Heart left ventricle (tissue), 16 donors: ENCODE measurements at regions of chr10 and their contacts with region 1.

Region 1: DNA sequence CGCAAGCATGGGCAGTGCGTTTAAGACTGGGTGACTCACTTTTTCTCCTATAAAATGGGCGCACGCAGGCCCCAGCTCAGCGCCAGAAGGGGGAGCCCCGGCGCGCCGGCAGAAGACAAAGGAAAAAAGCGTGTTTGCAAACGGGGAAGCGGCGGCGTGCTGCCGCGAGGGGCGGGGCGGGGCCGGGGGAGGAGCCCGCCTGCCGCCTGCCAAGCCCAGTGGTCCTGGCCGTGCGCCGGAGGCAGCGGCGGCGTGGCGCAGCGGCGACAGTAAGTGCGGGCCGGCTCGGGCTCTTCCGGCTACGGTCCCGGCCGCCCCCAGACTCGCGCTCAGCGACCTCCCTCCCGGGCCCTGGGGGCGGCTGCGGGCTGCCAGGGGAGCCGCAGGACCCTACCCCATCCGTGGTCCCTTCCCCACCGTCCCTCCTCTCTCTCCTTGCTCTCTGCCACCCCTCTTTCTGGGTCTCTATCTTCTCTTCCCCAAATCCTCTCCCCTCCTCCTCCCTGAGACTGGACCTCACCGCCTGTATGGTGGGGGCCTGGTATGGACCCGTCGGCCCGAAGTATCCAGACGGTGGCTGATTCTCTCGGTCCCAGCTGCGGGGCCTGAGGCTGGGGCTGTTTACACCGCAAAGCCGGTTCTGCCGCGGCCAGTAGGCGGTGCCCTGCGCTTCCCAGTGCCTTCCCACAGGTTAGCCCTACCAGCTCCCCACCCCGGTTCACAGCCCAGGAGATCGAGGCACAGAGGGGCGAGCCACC is at the start of gene SLC29A3:
- DNase-seq: peak; percentile 81 to 92 (median 83)
- ATAC-seq: peak; percentile 56 to 95 (median 90)
- H3K4me3 ChIP-seq: peak within 1 kb of the TSS; percentile 61 to 98 (median 78)
- H3K27ac ChIP-seq: peak within 1 kb of the TSS in 11 of 12 donors; percentile 26 to 83 (median 76)
- H3K4me1 ChIP-seq: peaks cover 0 to 34% (median 11%) of the 10 kb centered on the region in 12 donors
- H3K27me3 ChIP-seq: no peaks in the 10 kb centered on the region
- CTCF ChIP-seq: peak; percentile 23 to 68 (median 49)
- POLR2A ChIP-seq: peak in 1 of 2 donors; percentile 82
- total RNA-seq, gene SLC29A3: 0.76 to 6.2 (median 1.8) TPM

Region 2: DNA sequence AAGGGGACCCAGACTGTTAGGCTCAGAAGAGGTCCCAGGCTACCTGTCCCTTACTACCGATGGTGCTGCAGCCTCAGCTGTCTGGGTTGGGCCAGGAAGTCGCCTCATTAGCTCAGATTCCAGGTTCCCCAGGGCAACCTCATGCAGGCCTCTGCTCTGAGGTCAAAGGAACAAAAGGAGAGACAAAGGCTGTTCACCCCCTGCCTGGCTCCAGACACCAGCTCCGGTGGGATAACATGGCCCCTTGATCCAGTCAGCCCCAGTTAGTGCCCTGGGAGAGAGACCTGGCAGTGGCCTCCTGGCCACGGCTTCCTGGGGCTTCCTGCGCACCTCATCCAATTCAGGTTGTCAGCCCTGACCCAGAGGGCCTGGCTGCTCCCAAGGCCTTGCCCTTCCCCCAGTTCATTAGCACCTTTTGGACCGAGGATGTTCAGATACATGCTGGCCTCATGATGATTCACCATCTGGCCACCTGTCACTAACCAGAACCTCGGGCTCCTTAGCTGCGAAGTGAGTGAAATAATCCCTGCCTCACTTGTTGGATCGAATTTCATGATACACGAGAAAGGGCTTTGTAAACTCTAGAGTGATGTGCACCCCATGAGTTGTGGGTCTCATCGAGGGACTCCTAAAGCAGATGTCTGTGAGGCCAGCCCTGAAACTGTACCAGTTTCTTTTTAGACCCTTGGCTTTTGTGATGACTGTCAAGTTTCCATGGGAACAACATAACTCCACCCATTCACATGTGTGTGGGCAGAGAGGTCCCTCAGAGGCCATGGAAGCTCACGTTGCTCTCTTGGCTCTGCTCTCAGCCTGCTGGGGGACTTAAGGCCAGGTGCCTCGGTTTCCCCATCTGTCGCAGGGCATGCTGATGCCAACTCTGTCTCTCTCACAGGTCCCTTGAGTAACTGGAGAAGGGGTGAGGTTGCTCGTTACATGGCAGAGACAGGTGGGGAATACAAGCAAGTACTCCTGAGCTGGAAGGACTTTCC is 351.3 kb before region 1 on chr10:
- intact Hi-C with region 1: no loop called
- DNase-seq: no peak
- ATAC-seq: no peak
- H3K4me3 ChIP-seq: no peak overlapping the region
- H3K27ac ChIP-seq: no peak overlapping the region
- H3K4me1 ChIP-seq: no peaks in the 10 kb centered on the region
- H3K27me3 ChIP-seq: peaks cover 0 to 4% (median 0%) of the 10 kb centered on the region in 9 donors
- CTCF ChIP-seq: no peak
- POLR2A ChIP-seq: no peak

Region 3: DNA sequence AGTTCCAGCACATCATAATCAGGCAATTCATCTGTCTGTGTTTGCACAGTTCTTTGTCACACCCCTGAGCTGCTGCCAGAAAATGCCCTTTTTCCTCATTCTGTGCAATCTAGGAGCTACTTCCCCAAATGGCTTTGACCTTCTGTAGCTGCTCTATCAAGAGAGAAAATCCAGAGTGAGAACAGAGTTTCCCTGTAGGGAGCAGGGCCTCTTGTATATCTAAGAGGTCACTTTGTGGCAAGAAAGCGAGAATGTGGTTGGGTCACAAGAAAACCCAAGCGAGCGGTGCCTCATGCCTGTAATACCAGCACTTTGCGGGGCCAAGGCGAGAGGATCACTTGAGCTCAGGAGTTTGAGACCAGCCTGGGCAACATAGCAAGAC is 24.2 kb after region 1 on chr10:
- intact Hi-C with region 1: no loop called
- DNase-seq: no peak
- ATAC-seq: peak in 2 of 4 donors; percentile 34 to 51
- H3K4me3 ChIP-seq: no peak overlapping the region
- H3K27ac ChIP-seq: peak overlapping the region in 1 of 12 donors; percentile 76
- H3K4me1 ChIP-seq: peaks cover 0 to 24% (median 0%) of the 10 kb centered on the region in 12 donors
- H3K27me3 ChIP-seq: no peaks in the 10 kb centered on the region
- CTCF ChIP-seq: no peak
- POLR2A ChIP-seq: no peak

Region 4: GRCh38 chr10:71371750-71372166 is 52.5 kb after region 1 on chr10:
- intact Hi-C with region 1: loop called in 6 of 10 experiments (anchors 2 to 5 kb)
- DNase-seq: no peak
- ATAC-seq: peak in 3 of 4 donors; percentile 17 to 63 (median 40)
- H3K4me3 ChIP-seq: no peak overlapping the region
- H3K27ac ChIP-seq: peak overlapping the region in 3 of 12 donors; percentile 10 to 85 (median 37)
- H3K4me1 ChIP-seq: peaks cover 0 to 53% (median under 1%) of the 10 kb centered on the region in 12 donors
- H3K27me3 ChIP-seq: no peaks in the 10 kb centered on the region
- CTCF ChIP-seq: no peak
- POLR2A ChIP-seq: no peak

Region 5: DNA sequence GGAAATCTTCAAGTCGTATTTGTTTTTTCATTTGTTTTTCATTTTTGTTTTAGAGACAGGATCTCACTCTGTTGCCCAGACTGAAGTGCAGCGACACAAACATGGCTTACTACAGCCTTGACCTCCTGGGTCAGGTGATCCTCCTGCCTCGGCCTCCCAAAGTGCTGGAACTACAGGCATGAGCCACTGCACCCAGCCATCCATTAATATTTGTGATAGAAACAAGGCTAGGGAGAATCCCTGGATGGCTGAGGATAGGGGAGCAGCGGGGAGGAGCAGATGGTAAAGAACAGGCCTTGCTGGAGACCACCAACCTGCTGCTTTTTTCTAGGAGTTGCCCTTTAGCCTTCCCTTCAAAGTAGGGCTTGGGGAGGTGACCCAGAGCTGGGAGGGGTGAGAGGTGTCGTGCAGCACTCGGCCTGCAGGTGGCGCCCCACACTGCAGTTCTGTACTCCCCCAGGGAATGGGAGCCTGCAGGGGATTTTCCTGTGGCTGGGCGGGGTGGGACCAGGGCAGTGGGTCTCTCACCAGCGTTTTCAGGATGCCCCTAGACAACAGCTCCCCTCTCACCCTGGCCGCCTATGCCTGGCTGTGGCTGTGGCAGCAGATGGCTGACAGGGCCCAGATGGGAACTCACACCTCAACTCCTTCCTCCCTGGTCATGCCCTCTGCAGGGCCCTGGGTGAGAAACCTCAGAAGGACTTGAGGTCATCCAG is 64.9 kb after region 1 on chr10:
- intact Hi-C with region 1: loop called in 5 of 10 experiments (anchors 5 kb)
- DNase-seq: peak; percentile 55 to 83 (median 71)
- ATAC-seq: peak; percentile 82 to 92 (median 89)
- H3K4me3 ChIP-seq: no peak overlapping the region
- H3K27ac ChIP-seq: no peak overlapping the region
- H3K4me1 ChIP-seq: peaks cover 0 to 6% (median 0%) of the 10 kb centered on the region in 12 donors
- H3K27me3 ChIP-seq: no peaks in the 10 kb centered on the region
- CTCF ChIP-seq: peak; percentile 79 to 92 (median 88)
- POLR2A ChIP-seq: no peak

Region 6: DNA sequence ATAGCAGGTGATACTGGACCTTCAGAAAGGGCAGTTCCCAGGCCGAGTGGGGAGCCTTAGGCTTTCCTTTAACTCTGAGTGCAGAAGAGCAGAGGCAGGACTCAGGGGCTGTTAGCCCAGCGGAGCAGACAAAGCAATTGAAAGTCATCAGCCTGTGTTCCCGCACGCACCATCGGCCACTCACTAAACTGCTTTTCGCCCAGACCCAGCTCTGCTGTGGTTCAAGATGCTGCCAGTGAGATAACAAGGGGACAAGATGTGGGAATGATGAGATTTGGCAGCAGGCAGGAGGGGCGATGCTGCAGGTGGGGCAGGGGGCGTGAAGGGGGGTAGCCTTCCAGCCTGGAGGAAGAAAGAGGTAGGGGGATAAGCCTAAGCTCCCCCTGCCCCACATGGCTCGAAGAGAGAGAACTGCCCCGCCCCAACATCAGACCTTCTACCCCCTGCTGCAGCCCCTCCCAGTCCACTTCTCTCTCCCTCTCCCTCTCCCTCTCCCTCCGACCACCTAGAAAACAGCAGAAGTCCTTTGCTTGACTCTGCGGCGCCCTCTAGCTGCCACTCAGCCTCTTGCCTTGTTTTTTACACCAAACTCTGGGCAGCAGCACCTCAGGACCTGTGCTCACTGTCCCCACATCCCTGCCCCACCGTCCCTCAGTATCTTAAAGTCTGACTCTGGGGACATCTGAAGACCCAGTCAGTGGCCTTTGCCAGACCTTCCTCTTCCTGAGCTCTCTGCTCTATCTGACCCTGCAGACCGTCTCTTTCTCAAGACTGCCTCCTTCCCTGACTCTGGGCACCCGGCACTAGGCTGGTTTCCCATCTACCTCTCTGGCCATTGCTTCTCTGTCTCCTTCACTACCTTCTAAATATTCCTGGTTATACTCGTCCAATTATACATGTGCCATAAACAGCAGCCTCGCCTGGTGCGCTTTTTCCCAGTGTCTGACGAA is 289.9 kb after region 1 on chr10:
- intact Hi-C with region 1: loop called in 3 of 10 experiments (anchors 5 to 10 kb)
- DNase-seq: peak; percentile 72 to 87 (median 81)
- ATAC-seq: peak in 3 of 4 donors; percentile 22 to 68 (median 58)
- H3K4me3 ChIP-seq: no peak overlapping the region
- H3K27ac ChIP-seq: no peak overlapping the region
- H3K4me1 ChIP-seq: peaks cover 3 to 22% (median 17%) of the 10 kb centered on the region in 12 donors
- H3K27me3 ChIP-seq: no peaks in the 10 kb centered on the region
- CTCF ChIP-seq: peak; percentile 60 to 86 (median 82)
- POLR2A ChIP-seq: no peak

Region 7: GRCh38 chr10:71727738-71728737 is 408.8 kb after region 1 on chr10:
- intact Hi-C with region 1: loop called in 1 of 10 experiments (anchors 10 kb)
- DNase-seq: peak in 4 of 5 donors; percentile 69 to 86 (median 72)
- ATAC-seq: peak; percentile 60 to 80 (median 69)
- H3K4me3 ChIP-seq: peak overlapping the region in 1 of 12 donors; percentile 0
- H3K27ac ChIP-seq: peak overlapping the region; percentile 18 to 95 (median 76)
- H3K4me1 ChIP-seq: peaks cover 0 to 65% (median 35%) of the 10 kb centered on the region in 12 donors
- H3K27me3 ChIP-seq: no peaks in the 10 kb centered on the region
- CTCF ChIP-seq: no peak
- POLR2A ChIP-seq: no peak

Region 8: DNA sequence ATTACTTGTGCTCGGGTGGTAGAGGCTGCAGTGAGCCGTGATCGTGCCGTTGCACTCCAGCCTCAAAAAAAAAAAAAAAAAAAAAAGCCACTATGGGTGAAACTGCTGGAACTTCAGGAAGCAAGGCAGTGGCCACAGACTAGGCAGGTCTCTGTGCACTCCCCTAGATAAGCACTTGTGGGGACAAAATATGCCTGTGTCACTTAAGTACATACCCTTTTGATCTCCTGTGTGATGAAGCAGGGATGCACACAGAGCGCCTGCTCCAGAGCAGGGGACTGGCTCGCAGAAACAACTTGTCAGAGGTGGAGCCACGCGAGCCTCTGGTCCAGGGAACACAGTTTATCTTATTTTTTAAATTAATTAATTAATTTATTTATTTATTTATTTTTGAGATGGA is 574.7 kb after region 1 on chr10:
- intact Hi-C with region 1: loop called in 6 of 10 experiments (anchors 5 to 10 kb)
- DNase-seq: no peak
- ATAC-seq: no peak
- H3K4me3 ChIP-seq: no peak overlapping the region
- H3K27ac ChIP-seq: no peak overlapping the region
- H3K4me1 ChIP-seq: peaks cover 0 to 54% (median 7%) of the 10 kb centered on the region in 12 donors
- H3K27me3 ChIP-seq: no peaks in the 10 kb centered on the region
- CTCF ChIP-seq: no peak
- POLR2A ChIP-seq: no peak

Region 9: GRCh38 chr10:72048450-72049124 is 729.4 kb after region 1 on chr10:
- intact Hi-C with region 1: loop called in 2 of 10 experiments (anchors 10 kb)
- DNase-seq: peak; percentile 89 to 93 (median 92)
- ATAC-seq: peak; percentile 34 to 83 (median 78)
- H3K4me3 ChIP-seq: no peak overlapping the region
- H3K27ac ChIP-seq: peak overlapping the region in 1 of 12 donors; percentile 11
- H3K4me1 ChIP-seq: peaks cover 0 to 17% (median 0%) of the 10 kb centered on the region in 12 donors
- H3K27me3 ChIP-seq: no peaks in the 10 kb centered on the region
- CTCF ChIP-seq: peak; percentile 99 to 100 (median 99)
- POLR2A ChIP-seq: no peak